Gastrocnemius medialis (tissue), 4 donors: ENCODE measurements at regions of chr17 and their contacts with region 1.

Region 1: DNA sequence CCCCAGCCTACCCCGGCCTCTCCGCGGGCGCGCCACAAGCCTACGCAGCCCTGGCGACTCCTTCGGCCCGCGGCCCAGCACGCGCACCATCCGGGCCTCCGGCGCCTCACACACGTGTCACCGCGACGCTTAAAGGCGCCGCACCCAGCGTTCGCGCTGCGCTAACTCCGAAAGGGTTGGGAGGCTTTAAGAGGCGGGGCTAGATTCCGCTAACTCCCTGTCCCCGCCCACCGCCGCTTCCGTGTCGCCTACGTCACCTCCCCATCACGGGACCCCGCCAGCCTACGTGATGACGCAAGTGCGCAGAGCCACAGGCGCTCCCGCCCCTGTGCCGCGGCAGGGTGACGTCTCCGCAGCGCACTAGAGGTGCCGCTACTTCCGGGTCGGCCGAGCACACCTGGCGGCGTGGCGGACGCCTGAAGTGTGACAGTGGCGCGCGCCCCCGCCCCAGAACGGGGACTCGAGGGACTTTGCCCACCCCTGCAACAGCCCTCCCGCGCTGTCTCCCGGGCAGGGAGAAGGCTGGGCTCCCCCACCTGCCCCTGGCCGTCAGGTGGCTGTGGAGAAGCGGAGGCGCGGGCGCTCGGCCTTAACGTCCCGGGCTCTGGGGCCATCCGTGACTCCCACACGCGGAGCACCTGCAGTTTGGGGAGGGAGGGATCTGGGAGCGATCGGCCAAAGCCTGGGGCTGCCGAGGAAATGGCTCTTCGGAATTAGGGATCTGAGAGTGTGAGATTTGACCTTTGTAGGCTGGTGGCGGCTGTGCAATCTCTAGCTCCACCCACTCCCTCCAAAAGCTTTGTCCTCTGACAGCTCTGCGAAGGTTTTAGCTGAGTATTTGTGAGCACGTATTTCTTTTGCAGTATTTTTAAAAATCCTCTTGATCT is at the start of gene USP36:
- DNase-seq: peak; percentile 99
- ATAC-seq: peak; percentile 93 to 95
- H3K4me3 ChIP-seq: peak within 1 kb of the TSS; percentile 86 to 94 (median 89)
- H3K27ac ChIP-seq: peak within 1 kb of the TSS; percentile 91 to 97 (median 96)
- H3K4me1 ChIP-seq: peaks cover 13 to 18% of the 10 kb centered on the region in 2 donors
- H3K27me3 ChIP-seq: no peaks in the 10 kb centered on the region
- CTCF ChIP-seq: peak in 2 of 5 experiments; percentile 32 to 66
- POLR2A ChIP-seq: peak; percentile 97
- total RNA-seq, gene USP36: 15.2 to 21.1 (median 20.0) TPM

Region 2: GRCh38 chr17:78716814-78717393 is 124.1 kb before region 1 on chr17:
- in situ Hi-C with region 1: no loop called
- intact Hi-C with region 1: loop called (anchors 5 kb)
- DNase-seq: peak; percentile 81 to 90
- ATAC-seq: peak; percentile 86 to 91
- H3K4me3 ChIP-seq: peak overlapping the region; percentile 51 to 64 (median 59)
- H3K27ac ChIP-seq: peak overlapping the region; percentile 72 to 84 (median 83)
- H3K4me1 ChIP-seq: peaks cover 47 to 50% of the 10 kb centered on the region in 2 donors
- H3K27me3 ChIP-seq: no peaks in the 10 kb centered on the region
- CTCF ChIP-seq: peak in 3 of 5 experiments; percentile 3 to 40 (median 30)
- POLR2A ChIP-seq: no peak

Region 3: DNA sequence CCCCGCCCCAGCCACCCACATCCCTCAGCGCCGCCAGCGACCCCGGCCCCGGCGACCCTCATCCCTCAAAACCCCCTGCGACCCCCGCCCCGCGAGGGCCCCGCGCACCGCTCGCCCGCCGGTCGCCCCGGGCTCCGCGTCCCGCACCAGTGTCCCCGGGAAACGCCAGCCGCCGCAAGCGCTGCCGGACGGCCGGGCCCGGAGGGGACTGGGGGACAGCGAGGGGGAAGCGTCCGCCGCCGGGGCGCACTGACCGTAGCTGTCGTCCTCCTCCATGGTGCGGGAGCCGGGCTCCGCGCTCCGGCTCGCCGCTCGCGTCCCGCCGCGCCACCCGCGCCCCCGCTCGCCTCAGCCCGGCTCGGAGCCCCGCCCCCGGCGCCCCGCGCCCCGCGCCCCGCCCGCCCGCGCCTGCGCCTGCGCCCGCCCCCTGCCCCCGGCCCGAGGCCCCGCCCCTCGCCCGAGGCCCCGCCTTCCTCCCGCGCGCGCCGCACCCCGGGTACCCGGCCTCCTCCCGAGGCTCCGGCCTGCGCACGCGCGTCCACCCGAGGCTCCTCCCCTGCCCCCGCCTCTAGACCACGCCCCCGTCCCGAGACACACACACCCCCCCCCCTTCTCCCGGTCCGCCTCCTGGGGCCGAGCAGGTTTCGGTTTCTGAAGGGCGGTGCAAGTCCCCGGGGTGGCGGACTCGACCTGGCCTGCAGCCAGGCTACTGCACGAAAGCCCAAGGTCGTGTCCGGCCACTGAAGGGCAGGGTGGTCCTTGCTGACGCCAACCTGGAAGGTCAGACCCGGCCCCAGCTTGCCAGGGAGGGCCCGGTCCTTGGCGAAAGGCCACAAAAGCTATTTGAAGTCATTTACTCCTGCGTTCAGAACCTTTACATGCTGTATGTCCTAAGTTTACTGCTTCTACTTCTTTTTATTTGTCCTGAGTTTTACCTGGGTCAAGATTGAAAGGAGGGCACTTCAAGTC is 58.7 kb before region 1 on chr17 and contains the start of gene CYTH1:
- in situ Hi-C with region 1: no loop called
- intact Hi-C with region 1: loop called (anchors 1 kb)
- DNase-seq: peak; percentile 94 to 97
- ATAC-seq: peak; percentile 69 to 82
- H3K4me3 ChIP-seq: peak within 1 kb of the TSS; percentile 61 to 98 (median 90)
- H3K27ac ChIP-seq: peak within 1 kb of the TSS; percentile 86 to 99 (median 98)
- H3K4me1 ChIP-seq: peaks cover 24 to 27% of the 10 kb centered on the region in 2 donors
- H3K27me3 ChIP-seq: no peaks in the 10 kb centered on the region
- CTCF ChIP-seq: no peak
- POLR2A ChIP-seq: peak; percentile 82 to 90
- total RNA-seq, gene CYTH1: 24.7 to 43.7 (median 32.4) TPM

Region 4: GRCh38 chr17:78798695-78799559 is 42.0 kb before region 1 on chr17:
- in situ Hi-C with region 1: no loop called
- intact Hi-C with region 1: loop called (anchors 5 kb)
- DNase-seq: no peak
- ATAC-seq: peak; percentile 46 to 72
- H3K4me3 ChIP-seq: no peak overlapping the region
- H3K27ac ChIP-seq: peak overlapping the region in 3 of 4 donors; percentile 17 to 39 (median 32)
- H3K4me1 ChIP-seq: peaks cover 28 to 32% of the 10 kb centered on the region in 2 donors
- H3K27me3 ChIP-seq: no peaks in the 10 kb centered on the region
- CTCF ChIP-seq: peak; percentile 41 to 67 (median 61)
- POLR2A ChIP-seq: no peak

Region 5: DNA sequence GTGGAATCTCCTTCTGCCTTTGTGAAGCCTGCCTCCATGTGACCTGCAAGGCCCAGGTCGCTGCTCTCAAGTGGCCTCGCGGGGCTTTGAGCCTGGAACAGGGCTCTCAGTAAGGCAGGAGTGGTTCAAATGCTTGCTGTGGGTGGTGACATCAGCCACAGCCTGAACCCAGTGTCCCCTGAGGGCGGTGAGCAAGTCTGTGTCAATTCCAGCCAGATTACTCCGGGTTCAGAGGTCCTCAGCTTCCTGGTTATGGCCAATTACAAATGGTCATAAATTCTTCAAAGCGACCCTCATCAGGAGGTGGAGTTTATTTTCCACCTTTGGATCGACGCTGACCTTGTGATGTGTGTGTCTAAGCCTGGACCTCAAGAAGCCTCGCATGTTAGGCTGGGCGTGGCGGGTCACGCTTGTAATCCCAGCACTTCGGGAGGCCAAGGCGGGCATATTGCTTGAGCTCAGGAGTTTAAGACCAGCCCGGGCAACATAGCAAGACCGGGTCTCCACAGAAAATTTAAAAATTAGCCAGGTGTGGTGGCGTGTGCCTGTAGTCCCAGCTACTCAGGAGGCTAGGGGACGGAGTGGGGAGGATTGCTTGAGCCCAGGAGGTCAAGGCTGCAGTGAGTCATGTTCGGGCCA is 121.5 kb after region 1 on chr17:
- in situ Hi-C with region 1: no loop called
- intact Hi-C with region 1: no loop called
- DNase-seq: no peak
- ATAC-seq: no peak
- H3K4me3 ChIP-seq: no peak overlapping the region
- H3K27ac ChIP-seq: no peak overlapping the region
- H3K4me1 ChIP-seq: no peaks in the 10 kb centered on the region
- H3K27me3 ChIP-seq: no peaks in the 10 kb centered on the region
- CTCF ChIP-seq: no peak
- POLR2A ChIP-seq: no peak